Colonic mucosa (tissue), 4 donors: ENCODE measurements at regions of chr19 and their contacts with region 1.

Region 1: GRCh38 chr19:42567561-42567960 is 27.2 kb downstream of the CEACAM8 start:
- DNase-seq: no peak
- H3K4me3 ChIP-seq: no peak overlapping the region
- H3K27ac ChIP-seq: no peak overlapping the region
- H3K4me1 ChIP-seq: no peaks in the 10 kb centered on the region
- H3K27me3 ChIP-seq: no peaks in the 10 kb centered on the region
- CTCF ChIP-seq: no peak

Region 2: DNA sequence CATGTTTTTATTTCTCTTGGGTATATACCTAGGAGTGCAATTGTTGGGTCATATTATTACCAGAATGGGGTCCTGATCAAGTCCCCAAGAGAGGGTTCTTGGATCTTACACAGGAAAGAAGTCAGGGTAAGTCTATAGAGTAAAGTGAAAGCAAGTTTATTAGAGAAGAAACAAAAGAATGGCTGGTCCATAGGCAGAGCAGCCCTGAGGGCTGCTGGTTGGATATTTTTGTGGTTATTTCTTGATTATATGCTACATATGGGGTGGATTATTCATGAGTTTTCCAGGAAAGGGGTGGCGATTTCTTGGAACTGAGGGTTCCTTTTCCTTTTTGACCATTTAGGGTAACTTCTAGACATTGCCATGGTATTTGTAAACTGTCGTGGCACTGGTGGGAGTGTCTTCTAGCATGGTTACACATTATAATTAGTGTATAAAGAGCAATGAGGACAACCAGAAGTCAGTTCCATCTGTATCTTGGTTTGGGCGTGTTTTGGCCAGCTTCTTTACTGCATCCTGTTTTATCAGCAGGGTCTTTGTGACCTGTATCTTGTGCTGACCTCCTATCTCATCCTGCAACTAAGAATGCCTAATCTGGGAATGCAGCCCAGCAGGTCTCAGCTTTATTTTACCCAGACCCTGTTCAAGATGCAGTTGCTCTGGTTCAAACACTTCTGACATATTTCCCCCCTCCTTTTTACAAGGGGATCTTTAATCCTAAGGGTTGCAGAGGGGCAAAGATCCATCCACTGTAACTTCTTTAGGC is 80.3 kb before region 1 on chr19:
- intact Hi-C with region 1: no loop called
- DNase-seq: no peak
- H3K4me3 ChIP-seq: no peak overlapping the region
- H3K27ac ChIP-seq: no peak overlapping the region
- H3K4me1 ChIP-seq: no peaks in the 10 kb centered on the region
- H3K27me3 ChIP-seq: no peaks in the 10 kb centered on the region
- CTCF ChIP-seq: no peak

Region 3: DNA sequence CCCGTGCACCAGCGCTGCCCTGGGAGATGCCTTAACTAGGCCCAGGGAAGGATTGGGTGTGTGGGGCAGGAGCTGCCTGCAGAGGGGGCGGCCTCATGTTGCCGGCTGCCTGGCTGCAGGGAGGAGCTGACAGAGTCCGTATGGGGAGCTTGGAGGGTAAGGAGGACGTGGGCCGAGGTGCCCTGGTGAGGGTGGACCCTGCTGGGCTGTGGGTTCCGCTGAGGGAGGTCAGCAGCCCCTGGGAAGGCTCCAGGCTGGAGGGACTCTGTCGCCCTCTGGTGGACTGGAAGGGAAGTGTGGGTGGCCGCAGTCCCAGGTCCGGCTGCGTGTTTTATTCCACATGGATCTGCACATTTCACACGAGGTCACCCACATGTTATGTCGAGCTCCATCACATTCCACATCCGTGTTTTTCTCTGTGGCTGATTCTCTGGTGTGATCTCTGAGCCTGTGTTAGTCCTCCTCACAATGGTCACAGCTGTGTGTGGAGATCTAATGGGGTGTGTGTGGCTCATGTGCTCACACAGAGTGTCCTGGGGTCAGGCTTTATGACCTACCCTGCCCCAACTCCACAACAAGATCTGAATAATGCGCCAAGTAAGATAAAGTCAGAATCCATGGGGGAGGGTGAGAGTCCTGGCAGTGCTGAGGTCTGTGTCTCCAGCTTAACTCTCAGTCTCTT is 29.0 kb after region 1 on chr19:
- intact Hi-C with region 1: loop called (anchors 1 kb)
- DNase-seq: peak; percentile 36
- H3K4me3 ChIP-seq: no peak overlapping the region
- H3K27ac ChIP-seq: no peak overlapping the region
- H3K4me1 ChIP-seq: no peaks in the 10 kb centered on the region
- H3K27me3 ChIP-seq: no peaks in the 10 kb centered on the region
- CTCF ChIP-seq: peak; percentile 95

Region 4: DNA sequence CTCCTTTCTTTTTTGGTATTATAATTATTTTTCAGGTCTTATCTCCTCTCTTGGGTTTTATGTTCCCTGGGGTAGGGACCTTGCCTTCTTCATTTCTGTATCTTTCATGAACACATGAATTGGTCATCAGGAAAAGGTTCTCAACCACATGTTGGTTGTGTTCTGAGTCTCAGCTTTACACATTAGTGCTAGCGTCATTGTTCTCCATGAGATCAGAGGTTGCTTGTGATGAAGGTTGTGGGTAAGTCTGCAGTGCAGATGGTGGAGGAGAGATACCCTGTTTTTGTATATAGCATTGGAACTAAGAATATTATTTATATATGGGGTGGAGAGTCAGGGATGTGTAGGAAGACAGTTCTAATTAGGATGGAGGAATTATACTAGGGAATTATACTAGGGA is 51.7 kb after region 1 on chr19:
- intact Hi-C with region 1: no loop called
- DNase-seq: no peak
- H3K4me3 ChIP-seq: no peak overlapping the region
- H3K27ac ChIP-seq: no peak overlapping the region
- H3K4me1 ChIP-seq: no peaks in the 10 kb centered on the region
- H3K27me3 ChIP-seq: no peaks in the 10 kb centered on the region
- CTCF ChIP-seq: no peak